ENCODE measurements at regions of chr6 and their contacts with region 1.

Region 1: GRCh38 chr6:75208298-75209183 is 2.7 kb upstream of the COL12A1 start:
- DNase-seq: peak; percentile 84
- H3K4me3 Mint-ChIP-seq: peak overlapping the region; percentile 15
- H3K27ac Mint-ChIP-seq: no peak overlapping the region
- H3K4me1 Mint-ChIP-seq: peaks cover 29% of the 10 kb centered on the region
- H3K27me3 Mint-ChIP-seq: peaks cover 8% of the 10 kb centered on the region
- CTCF ChIP-seq: peak; percentile 83

Region 2: DNA sequence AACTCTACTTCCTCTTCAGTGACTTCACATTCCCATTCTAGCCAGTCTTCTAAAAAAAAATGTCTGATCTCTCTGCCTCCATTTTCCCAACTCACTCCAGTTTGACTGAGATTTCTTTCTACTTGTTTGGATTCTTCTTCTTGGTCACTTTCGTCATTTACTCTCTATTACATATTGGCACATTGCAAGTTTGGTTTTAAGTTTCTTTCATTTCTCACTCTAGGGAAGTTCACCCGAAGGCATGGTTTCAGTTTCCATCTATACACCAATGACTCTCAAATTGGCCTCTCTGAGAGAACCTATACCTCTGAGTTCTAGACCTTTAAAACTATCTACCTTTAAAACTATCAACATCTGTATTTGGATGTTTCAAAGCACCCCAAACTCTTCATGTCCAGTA is 1461.3 kb before region 1 on chr6:
- CTCF ChIA-PET with region 1: interaction called, 10 read pairs
- POLR2A ChIA-PET with region 1: no interaction called
- intact Hi-C with region 1: no loop called
- DNase-seq: no peak
- H3K4me3 Mint-ChIP-seq: no peak overlapping the region
- H3K27ac Mint-ChIP-seq: no peak overlapping the region
- H3K4me1 Mint-ChIP-seq: peaks cover 6% of the 10 kb centered on the region
- H3K27me3 Mint-ChIP-seq: no peaks in the 10 kb centered on the region
- CTCF ChIP-seq: no peak

Region 3: GRCh38 chr6:73985891-73986290 is 1222.7 kb before region 1 on chr6:
- CTCF ChIA-PET with region 1: interaction called, 36 read pairs
- POLR2A ChIA-PET with region 1: interaction called, 3 read pairs
- intact Hi-C with region 1: loop called (anchors 5 kb)
- DNase-seq: peak; percentile 58
- H3K4me3 Mint-ChIP-seq: no peak overlapping the region
- H3K27ac Mint-ChIP-seq: no peak overlapping the region
- H3K4me1 Mint-ChIP-seq: no peaks in the 10 kb centered on the region
- H3K27me3 Mint-ChIP-seq: no peaks in the 10 kb centered on the region
- CTCF ChIP-seq: peak; percentile 31

Region 4: GRCh38 chr6:74357321-74357720 is 851.2 kb before region 1 on chr6:
- CTCF ChIA-PET with region 1: interaction called, 11 read pairs
- POLR2A ChIA-PET with region 1: interaction called, 4 read pairs
- intact Hi-C with region 1: no loop called
- DNase-seq: peak; percentile 49
- H3K4me3 Mint-ChIP-seq: no peak overlapping the region
- H3K27ac Mint-ChIP-seq: peak overlapping the region; percentile 27
- H3K4me1 Mint-ChIP-seq: peaks cover 5% of the 10 kb centered on the region
- H3K27me3 Mint-ChIP-seq: no peaks in the 10 kb centered on the region
- CTCF ChIP-seq: no peak

Region 5: DNA sequence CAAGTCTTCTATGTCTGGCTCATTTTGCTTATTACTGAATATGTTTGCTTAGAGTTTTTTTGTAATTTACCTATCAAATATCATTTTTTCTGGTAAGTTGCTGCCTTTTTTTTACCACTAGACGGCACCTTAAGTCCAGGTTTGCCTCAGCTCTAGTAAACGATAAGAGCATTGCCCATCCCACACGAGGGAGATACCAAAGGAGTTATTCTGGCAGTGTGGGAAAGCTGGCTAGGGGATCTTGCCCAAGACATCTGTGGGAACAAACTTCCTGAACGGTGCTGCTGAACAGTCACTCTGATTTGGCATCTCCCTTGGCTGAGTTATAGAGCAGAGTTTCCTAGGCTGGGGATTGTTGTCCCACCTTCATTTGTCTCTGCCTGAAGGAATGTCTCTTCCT is 309.1 kb before region 1 on chr6:
- CTCF ChIA-PET with region 1: interaction called, 7 read pairs
- POLR2A ChIA-PET with region 1: no interaction called
- intact Hi-C with region 1: loop called (anchors 1 kb)
- DNase-seq: peak; percentile 61
- H3K4me3 Mint-ChIP-seq: no peak overlapping the region
- H3K27ac Mint-ChIP-seq: no peak overlapping the region
- H3K4me1 Mint-ChIP-seq: no peaks in the 10 kb centered on the region
- H3K27me3 Mint-ChIP-seq: no peaks in the 10 kb centered on the region
- CTCF ChIP-seq: peak; percentile 40

Region 6: GRCh38 chr6:75224303-75224926 is 15.9 kb after region 1 on chr6:
- CTCF ChIA-PET with region 1: interaction called, 46 read pairs
- POLR2A ChIA-PET with region 1: no interaction called
- intact Hi-C with region 1: no loop called
- DNase-seq: no peak
- H3K4me3 Mint-ChIP-seq: no peak overlapping the region
- H3K27ac Mint-ChIP-seq: no peak overlapping the region
- H3K4me1 Mint-ChIP-seq: no peaks in the 10 kb centered on the region
- H3K27me3 Mint-ChIP-seq: no peaks in the 10 kb centered on the region
- CTCF ChIP-seq: no peak

Region 7: DNA sequence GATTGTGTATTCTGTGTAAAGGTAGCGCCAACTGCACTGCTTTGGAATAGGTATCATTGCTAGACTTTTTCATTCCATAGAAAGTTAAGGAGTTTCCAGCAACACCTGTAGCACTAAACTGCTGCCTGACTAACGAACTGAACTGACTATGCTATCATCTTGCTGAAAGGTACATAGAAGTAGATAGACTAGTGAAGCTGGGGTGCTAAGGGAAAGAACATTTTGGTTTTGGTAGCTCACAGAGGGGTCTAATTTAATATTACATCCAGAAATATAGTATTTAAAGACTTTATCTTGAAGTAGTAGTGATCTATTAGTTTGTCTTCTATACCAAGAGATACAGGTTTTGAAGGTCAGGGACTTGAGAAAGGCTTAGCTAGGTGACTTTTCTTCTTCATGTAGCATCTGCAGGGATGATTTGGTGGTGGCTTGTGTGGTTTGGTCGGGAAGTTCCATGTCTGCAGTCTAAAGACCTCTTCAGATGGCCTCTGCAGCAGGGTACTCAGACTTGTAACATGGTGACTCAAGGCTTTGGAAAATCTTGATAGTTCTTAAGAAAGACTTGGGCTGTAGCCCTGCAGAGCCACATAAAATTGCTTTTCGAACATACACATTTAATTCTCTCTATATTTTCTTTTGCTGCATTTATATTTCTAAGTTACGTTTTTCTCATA is 403.3 kb after region 1 on chr6:
- CTCF ChIA-PET with region 1: no interaction called
- POLR2A ChIA-PET with region 1: no interaction called
- intact Hi-C with region 1: no loop called
- DNase-seq: no peak
- H3K4me3 Mint-ChIP-seq: no peak overlapping the region
- H3K27ac Mint-ChIP-seq: no peak overlapping the region
- H3K4me1 Mint-ChIP-seq: peaks cover 50% of the 10 kb centered on the region
- H3K27me3 Mint-ChIP-seq: no peaks in the 10 kb centered on the region
- CTCF ChIP-seq: no peak